Endothelial cell of umbilical vein (primary cell): ENCODE measurements at regions of chr5 and their contacts with region 1.

Region 1: GRCh38 chr5:54517174-54518092 is at the start of gene SNX18:
- DNase-seq: peak; percentile 89
- H3K4me3 ChIP-seq: peak within 1 kb of the TSS; percentile 40 to 60 (median 45)
- H3K27ac ChIP-seq: peak within 1 kb of the TSS; percentile 38
- H3K4me1 ChIP-seq: peaks cover 44% of the 10 kb centered on the region
- H3K27me3 ChIP-seq: no peaks in the 10 kb centered on the region
- CTCF ChIP-seq: peak; percentile 94 to 96
- POLR2A ChIP-seq: peak; percentile 92
- total RNA-seq, gene SNX18: 25.2 and 25.3 TPM in 2 replicates

Region 2: GRCh38 chr5:54195701-54196100 is 321.7 kb before region 1 on chr5:
- CTCF ChIA-PET with region 1: no interaction called
- POLR2A ChIA-PET with region 1: no interaction called
- dilution Hi-C with region 1: no loop called
- intact Hi-C with region 1: no loop called
- DNase-seq: no peak
- H3K4me3 ChIP-seq: no peak overlapping the region
- H3K27ac ChIP-seq: no peak overlapping the region
- H3K4me1 ChIP-seq: no peaks in the 10 kb centered on the region
- H3K27me3 ChIP-seq: no peaks in the 10 kb centered on the region
- CTCF ChIP-seq: no peak
- POLR2A ChIP-seq: no peak

Region 3: GRCh38 chr5:54443270-54443669 is 74.2 kb before region 1 on chr5:
- CTCF ChIA-PET with region 1: interaction called, 3 read pairs
- POLR2A ChIA-PET with region 1: no interaction called
- dilution Hi-C with region 1: no loop called
- intact Hi-C with region 1: loop called (anchors 2 kb)
- DNase-seq: peak; percentile 51
- H3K4me3 ChIP-seq: no peak overlapping the region
- H3K27ac ChIP-seq: no peak overlapping the region
- H3K4me1 ChIP-seq: no peaks in the 10 kb centered on the region
- H3K27me3 ChIP-seq: peaks cover 14 to 15% of the 10 kb centered on the region in 2 experiments
- CTCF ChIP-seq: peak; percentile 43 to 44
- POLR2A ChIP-seq: no peak

Region 4: GRCh38 chr5:54646356-54647101 is 129.1 kb after region 1 on chr5:
- CTCF ChIA-PET with region 1: no interaction called
- POLR2A ChIA-PET with region 1: no interaction called
- dilution Hi-C with region 1: no loop called
- intact Hi-C with region 1: loop called (anchors 1 kb)
- DNase-seq: peak; percentile 73
- H3K4me3 ChIP-seq: no peak overlapping the region
- H3K27ac ChIP-seq: no peak overlapping the region
- H3K4me1 ChIP-seq: peaks cover 23% of the 10 kb centered on the region
- H3K27me3 ChIP-seq: no peaks in the 10 kb centered on the region
- CTCF ChIP-seq: no peak
- POLR2A ChIP-seq: no peak

Region 5: GRCh38 chr5:54673523-54674225 is 156.2 kb after region 1 on chr5:
- CTCF ChIA-PET with region 1: no interaction called
- POLR2A ChIA-PET with region 1: no interaction called
- dilution Hi-C with region 1: no loop called
- intact Hi-C with region 1: no loop called
- DNase-seq: no peak
- H3K4me3 ChIP-seq: no peak overlapping the region
- H3K27ac ChIP-seq: no peak overlapping the region
- H3K4me1 ChIP-seq: peaks cover 8% of the 10 kb centered on the region
- H3K27me3 ChIP-seq: peaks cover 3 to 9% of the 10 kb centered on the region in 2 experiments
- CTCF ChIP-seq: no peak
- POLR2A ChIP-seq: no peak

Region 6: GRCh38 chr5:54807421-54807820 is 290.0 kb after region 1 on chr5:
- CTCF ChIA-PET with region 1: interaction called, 4 read pairs
- POLR2A ChIA-PET with region 1: no interaction called
- dilution Hi-C with region 1: no loop called
- intact Hi-C with region 1: loop called (anchors 1 kb)
- DNase-seq: peak; percentile 84
- H3K4me3 ChIP-seq: no peak overlapping the region
- H3K27ac ChIP-seq: peak overlapping the region; percentile 80
- H3K4me1 ChIP-seq: peaks cover 13% of the 10 kb centered on the region
- H3K27me3 ChIP-seq: no peaks in the 10 kb centered on the region
- CTCF ChIP-seq: no peak
- POLR2A ChIP-seq: no peak

Region 7: DNA sequence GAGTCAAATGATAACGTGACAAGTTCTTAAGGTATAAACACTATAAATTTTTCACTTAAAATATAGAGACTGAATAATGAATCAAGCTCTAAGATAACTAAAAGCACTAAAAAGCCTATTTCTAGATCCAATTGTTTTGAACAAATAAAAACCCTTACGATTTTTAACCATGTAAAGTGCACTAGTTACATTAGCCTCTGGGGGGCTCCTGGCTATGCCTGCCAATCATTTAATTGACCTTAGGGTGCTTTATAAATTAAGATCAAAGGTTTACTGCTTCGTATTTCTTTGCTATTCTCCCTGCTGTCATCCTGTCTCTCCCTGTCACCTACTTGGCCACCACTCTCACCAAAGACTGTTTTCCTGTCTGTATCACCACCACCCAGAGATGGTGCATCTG is 334.6 kb after region 1 on chr5:
- CTCF ChIA-PET with region 1: interaction called, 18 read pairs
- POLR2A ChIA-PET with region 1: no interaction called
- dilution Hi-C with region 1: no loop called
- intact Hi-C with region 1: no loop called
- DNase-seq: no peak
- H3K4me3 ChIP-seq: no peak overlapping the region
- H3K27ac ChIP-seq: no peak overlapping the region
- H3K4me1 ChIP-seq: no peaks in the 10 kb centered on the region
- H3K27me3 ChIP-seq: peaks cover 0 to 4% of the 10 kb centered on the region in 2 experiments
- CTCF ChIP-seq: no peak
- POLR2A ChIP-seq: no peak

Region 8: GRCh38 chr5:54895816-54896341 is 378.4 kb after region 1 on chr5:
- CTCF ChIA-PET with region 1: interaction called, 54 read pairs
- POLR2A ChIA-PET with region 1: no interaction called
- dilution Hi-C with region 1: no loop called
- intact Hi-C with region 1: loop called (anchors 1 kb)
- DNase-seq: peak; percentile 40
- H3K4me3 ChIP-seq: no peak overlapping the region
- H3K27ac ChIP-seq: no peak overlapping the region
- H3K4me1 ChIP-seq: peaks cover 1% of the 10 kb centered on the region
- H3K27me3 ChIP-seq: peaks cover 0 to 2% of the 10 kb centered on the region in 2 experiments
- CTCF ChIP-seq: peak; percentile 7 to 10
- POLR2A ChIP-seq: no peak

Region 9: GRCh38 chr5:55146543-55147151 is 629.2 kb after region 1 on chr5:
- CTCF ChIA-PET with region 1: interaction called, 4 read pairs
- POLR2A ChIA-PET with region 1: no interaction called
- dilution Hi-C with region 1: no loop called
- intact Hi-C with region 1: loop called (anchors 2 kb)
- DNase-seq: peak; percentile 92
- H3K4me3 ChIP-seq: no peak overlapping the region
- H3K27ac ChIP-seq: no peak overlapping the region
- H3K4me1 ChIP-seq: peaks cover 5% of the 10 kb centered on the region
- H3K27me3 ChIP-seq: no peaks in the 10 kb centered on the region
- CTCF ChIP-seq: peak; percentile 90 to 94
- POLR2A ChIP-seq: no peak